Vagina (tissue), 2 donors: ENCODE measurements at regions of chr4 and their contacts with region 1.

Region 1: DNA sequence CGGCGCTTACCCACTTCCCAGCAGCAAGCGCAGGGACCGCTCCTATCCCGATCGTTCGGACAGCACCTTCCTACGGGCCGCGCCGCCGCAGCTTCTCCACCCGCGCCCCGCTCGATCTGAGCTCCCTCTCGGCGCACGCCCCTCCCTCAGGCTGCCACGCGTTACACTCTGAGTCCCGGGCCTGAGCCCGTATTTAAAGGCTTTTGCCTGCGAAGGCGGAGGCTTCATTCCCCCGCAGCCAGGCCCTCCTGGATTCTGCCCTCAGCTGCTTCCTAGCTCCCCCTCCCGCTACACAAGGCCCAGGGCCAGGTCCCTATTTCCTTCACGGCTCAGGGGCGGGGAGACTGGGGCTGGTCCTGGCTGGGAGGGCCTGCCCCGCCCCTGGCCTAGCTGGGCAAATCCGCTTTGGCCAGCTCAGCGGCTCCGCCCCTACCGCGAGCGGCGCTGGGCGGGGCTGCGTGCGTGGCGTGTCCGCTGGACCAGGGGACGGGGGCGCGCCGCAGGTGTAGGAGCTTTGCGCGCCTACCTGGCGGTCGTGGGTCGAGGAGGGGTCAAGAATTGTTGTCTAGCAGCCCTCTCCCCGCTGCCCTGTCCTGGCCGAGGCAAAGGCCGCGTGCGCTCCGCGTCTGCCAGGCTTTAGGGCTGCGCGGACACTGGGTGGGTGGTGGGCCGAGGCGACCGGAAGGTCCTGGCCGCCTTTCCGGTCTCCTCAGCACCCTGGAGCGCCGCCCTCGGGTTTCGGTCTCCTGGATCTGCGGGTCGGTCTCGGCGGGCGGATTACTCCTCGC is at the start of gene UGDH:
- DNase-seq: peak; percentile 97 to 98
- H3K4me3 ChIP-seq: peak within 1 kb of the TSS; percentile 86 to 91
- H3K27ac ChIP-seq: peak within 1 kb of the TSS; percentile 94
- H3K4me1 ChIP-seq: peaks cover 47% of the 10 kb centered on the region
- H3K27me3 ChIP-seq: no peaks in the 10 kb centered on the region
- CTCF ChIP-seq: no peak
- POLR2A ChIP-seq: peak in 1 of 2 donors; percentile 91
- total RNA-seq, gene UGDH: 43.5 TPM

Region 2: GRCh38 chr4:37686373-37687193 is 1840.9 kb before region 1 on chr4 and contains the start of gene RELL1:
- intact Hi-C with region 1: loop called (anchors 5 kb)
- DNase-seq: peak; percentile 100
- H3K4me3 ChIP-seq: peak within 1 kb of the TSS; percentile 90 to 97
- H3K27ac ChIP-seq: peak within 1 kb of the TSS; percentile 97
- H3K4me1 ChIP-seq: peaks cover 24% of the 10 kb centered on the region
- H3K27me3 ChIP-seq: no peaks in the 10 kb centered on the region
- CTCF ChIP-seq: no peak
- POLR2A ChIP-seq: no peak
- total RNA-seq, gene RELL1: 38.8 TPM

Region 3: DNA sequence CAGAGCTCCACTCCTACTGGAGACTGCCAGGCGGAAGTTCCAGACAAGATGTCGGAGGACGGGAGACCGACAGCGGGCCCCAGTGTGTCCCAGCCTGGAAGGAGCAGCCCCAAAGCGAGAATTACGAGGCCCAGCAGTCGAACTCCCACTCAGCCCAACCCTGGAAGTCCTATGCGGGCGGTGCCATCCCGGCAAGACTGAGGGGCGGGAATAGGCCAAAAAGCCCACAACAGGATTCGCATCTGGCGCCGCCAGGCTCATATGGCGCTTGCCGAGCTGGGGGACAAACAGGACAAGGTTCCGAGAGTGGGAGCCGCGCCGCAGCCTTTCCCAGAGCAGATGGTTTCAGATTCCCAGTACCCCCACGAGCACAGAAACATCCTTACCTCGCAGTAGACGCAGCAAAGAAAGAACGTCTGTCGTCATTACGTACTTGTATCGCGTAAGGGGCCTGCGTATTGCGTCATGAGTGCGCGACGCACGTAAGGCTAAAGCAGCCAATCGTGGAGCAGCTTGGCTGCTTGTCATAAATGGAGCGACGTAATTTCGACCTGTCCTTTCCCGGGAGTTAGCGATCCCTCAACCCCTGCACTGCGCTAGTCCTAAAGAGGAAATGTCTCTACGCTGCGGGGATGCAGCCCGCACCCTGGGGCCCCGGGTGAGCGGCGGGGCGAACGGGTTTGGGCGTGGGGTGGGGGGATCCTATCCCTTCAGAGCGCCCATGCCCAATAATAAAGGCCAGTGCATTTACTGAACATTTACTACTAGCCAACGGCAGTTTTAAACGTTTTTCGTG is 68.8 kb before region 1 on chr4 and contains the starts of genes LIAS and RPL9:
- intact Hi-C with region 1: loop called (anchors 5 kb)
- DNase-seq: peak in 1 of 2 donors; percentile 99
- H3K4me3 ChIP-seq: peak within 1 kb of the TSS; percentile 80 to 90
- H3K27ac ChIP-seq: peak within 1 kb of the TSS; percentile 98
- H3K4me1 ChIP-seq: peaks cover 36% of the 10 kb centered on the region
- H3K27me3 ChIP-seq: no peaks in the 10 kb centered on the region
- CTCF ChIP-seq: no peak
- POLR2A ChIP-seq: peak in 1 of 2 donors; percentile 88
- total RNA-seq, gene LIAS: 10.1 TPM
- total RNA-seq, gene RPL9: 2,100 TPM

Region 4: GRCh38 chr4:39638354-39639240 is 111.1 kb after region 1 on chr4 and contains the start of gene SMIM14:
- intact Hi-C with region 1: loop called (anchors 5 kb)
- DNase-seq: peak; percentile 97 to 99
- H3K4me3 ChIP-seq: peak within 1 kb of the TSS; percentile 94 to 97
- H3K27ac ChIP-seq: peak within 1 kb of the TSS; percentile 99
- H3K4me1 ChIP-seq: peaks cover 38% of the 10 kb centered on the region
- H3K27me3 ChIP-seq: no peaks in the 10 kb centered on the region
- CTCF ChIP-seq: peak in 2 of 3 experiments; percentile 35 to 37
- POLR2A ChIP-seq: peak; percentile 10 to 96
- total RNA-seq, gene SMIM14: 23.8 TPM

Region 5: DNA sequence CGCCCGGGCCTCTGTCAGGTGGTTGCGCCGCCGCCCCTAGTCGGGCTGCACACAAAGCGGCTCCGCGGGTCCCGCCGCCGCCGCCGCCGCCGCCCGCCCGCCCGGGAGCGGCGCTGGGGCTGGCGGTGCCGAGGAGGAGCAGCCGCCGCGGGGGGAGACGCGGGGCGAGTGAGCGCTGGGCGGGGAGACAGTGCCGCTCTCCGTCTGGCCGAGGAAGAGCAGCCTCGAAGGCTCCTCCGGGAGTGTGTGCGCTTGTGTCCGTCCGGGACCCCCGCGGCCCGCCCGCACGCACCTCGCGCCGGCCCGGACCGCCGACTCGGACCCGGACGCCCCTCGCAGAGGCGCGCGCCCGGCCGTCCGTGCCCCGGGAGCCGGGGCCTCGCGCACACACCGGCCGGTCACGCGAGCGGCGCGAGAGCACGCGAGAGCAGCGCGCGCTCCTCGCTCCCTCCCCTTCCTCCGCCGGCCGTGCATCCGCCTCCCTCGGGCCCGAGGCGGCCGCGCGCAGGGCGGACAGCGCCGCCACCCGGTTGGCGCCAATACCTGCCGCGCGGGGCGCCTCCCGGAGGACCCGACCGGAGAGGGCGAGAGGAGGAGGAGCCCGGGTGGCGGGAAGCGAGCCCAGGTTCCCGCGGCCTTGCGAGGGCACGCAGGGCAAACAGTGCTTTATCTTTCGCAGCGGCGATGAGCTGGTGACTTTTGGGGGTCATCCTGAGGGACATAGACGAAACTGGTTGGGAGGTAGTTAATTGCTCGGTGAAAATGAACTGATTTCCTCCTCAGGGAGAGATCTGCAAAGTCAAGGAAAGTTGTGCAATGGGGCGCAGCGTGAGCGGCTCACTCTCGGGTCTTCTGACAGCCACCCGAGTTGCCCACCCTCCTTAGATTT is 450.3 kb after region 1 on chr4 and contains the start of gene PDS5A:
- intact Hi-C with region 1: loop called (anchors 5 kb)
- DNase-seq: peak in 1 of 2 donors; percentile 89
- H3K4me3 ChIP-seq: peak within 1 kb of the TSS; percentile 80 to 98
- H3K27ac ChIP-seq: peak within 1 kb of the TSS; percentile 98
- H3K4me1 ChIP-seq: peaks cover 39% of the 10 kb centered on the region
- H3K27me3 ChIP-seq: no peaks in the 10 kb centered on the region
- CTCF ChIP-seq: peak; percentile 68 to 83 (median 72)
- POLR2A ChIP-seq: peak in 1 of 2 donors; percentile 32
- total RNA-seq, gene PDS5A: 64.6 TPM